Activated CD8-positive, alpha-beta T cell treated with anti-CD3 and anti-CD28 coated beads, Interleukin-2, amount 10 ng/mL, durations not matched to agents 7 days and 5 days (primary cell): ENCODE measurements at regions of chr19 and their contacts with region 1.

Region 1: GRCh38 chr19:49929611-49930482 is 543 bp upstream of the NUP62 start:
- DNase-seq: peak; percentile 97
- ATAC-seq: peak; percentile 84
- H3K4me3 Mint-ChIP-seq: peak overlapping the region; percentile 97
- H3K27ac Mint-ChIP-seq: peak overlapping the region; percentile 99
- H3K4me1 Mint-ChIP-seq: peaks cover 70% of the 10 kb centered on the region
- H3K27me3 Mint-ChIP-seq: no peaks in the 10 kb centered on the region

Region 2: DNA sequence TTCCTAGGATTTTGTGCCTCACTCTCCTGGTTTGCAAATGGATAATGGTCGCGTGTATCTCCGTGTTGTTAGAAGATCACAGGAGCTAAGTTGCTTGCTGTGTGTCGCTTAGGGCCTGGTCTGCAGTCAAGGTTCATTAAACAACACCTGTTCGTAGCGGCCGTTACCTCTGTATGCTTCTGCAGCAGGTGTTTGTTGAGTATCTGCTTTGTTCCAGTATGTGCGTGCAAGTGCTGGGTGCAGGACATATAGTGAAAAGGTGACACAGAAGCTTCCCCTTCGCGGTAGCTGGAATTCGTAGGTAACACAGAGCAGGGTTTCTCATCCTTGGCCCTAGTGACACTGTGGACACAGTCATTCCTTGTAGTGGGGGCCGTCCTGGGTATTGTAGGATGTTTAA is 106.4 kb before region 1 on chr19:
- CTCF ChIA-PET with region 1: no interaction called
- POLR2A ChIA-PET with region 1: no interaction called
- DNase-seq: no peak
- ATAC-seq: no peak
- H3K4me3 Mint-ChIP-seq: no peak overlapping the region
- H3K27ac Mint-ChIP-seq: no peak overlapping the region
- H3K4me1 Mint-ChIP-seq: peaks cover 14% of the 10 kb centered on the region
- H3K27me3 Mint-ChIP-seq: no peaks in the 10 kb centered on the region

Region 3: DNA sequence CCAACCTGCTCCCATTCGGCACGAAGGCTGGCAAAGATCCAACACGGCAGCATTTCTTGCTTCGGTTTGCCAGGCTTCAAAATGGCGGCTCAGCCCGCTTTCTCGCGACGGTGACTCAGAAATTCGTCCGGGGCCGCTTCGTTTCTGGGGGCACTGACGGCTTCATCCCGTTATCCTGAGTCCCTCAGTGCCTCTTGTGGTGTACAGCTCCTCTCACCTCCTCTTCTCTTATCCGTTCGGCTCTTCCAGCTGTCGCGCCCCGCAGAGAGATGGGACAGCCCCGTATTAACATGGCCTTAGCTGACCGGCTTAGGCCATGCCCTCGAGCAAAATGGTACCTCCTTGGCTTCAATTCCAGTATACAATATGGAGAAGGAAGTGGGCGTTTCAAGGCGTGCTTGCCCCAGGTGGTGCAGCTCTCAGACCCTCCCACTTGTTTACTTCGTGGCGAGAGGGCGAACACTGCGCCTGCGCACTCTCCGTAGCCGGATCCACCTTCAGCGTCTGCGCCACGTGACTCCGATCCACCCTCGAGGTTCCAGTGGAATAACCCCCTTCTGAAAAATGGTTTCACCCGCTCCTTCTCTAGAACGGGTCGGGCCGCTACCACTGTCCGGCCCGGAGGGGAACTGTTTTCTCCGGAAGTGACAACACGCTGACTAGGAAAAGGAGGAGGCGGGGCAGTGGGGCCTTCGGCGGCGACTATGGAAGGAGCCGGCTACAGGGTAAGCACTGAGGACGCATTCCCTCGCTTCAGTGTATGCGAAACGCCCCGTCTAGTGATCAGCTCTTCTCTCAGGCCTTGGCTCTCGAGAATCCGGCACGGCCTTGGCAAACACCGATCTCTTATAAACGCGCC is 52.6 kb before region 1 on chr19 and contains the starts of genes AKT1S1 and TBC1D17:
- CTCF ChIA-PET with region 1: no interaction called
- POLR2A ChIA-PET with region 1: interaction called, 14 read pairs
- DNase-seq: peak; percentile 99
- ATAC-seq: peak; percentile 75
- H3K4me3 Mint-ChIP-seq: no peak within 1 kb of the TSS
- H3K27ac Mint-ChIP-seq: no peak within 1 kb of the TSS
- H3K4me1 Mint-ChIP-seq: peaks cover 33% of the 10 kb centered on the region
- H3K27me3 Mint-ChIP-seq: no peaks in the 10 kb centered on the region
- total RNA-seq, gene AKT1S1: 15.6 to 16.4 TPM
- total RNA-seq, gene TBC1D17: 28.6 to 30.8 TPM

Region 4: GRCh38 chr19:49896863-49897621 is 32.8 kb before region 1 on chr19 and contains the start of gene IL4I1:
- CTCF ChIA-PET with region 1: interaction called, 4 read pairs
- POLR2A ChIA-PET with region 1: interaction called, 27 read pairs
- DNase-seq: peak; percentile 72
- ATAC-seq: peak; percentile 73
- H3K4me3 Mint-ChIP-seq: peak within 1 kb of the TSS; percentile 53
- H3K27ac Mint-ChIP-seq: peak within 1 kb of the TSS; percentile 87
- H3K4me1 Mint-ChIP-seq: peaks cover 37% of the 10 kb centered on the region
- H3K27me3 Mint-ChIP-seq: no peaks in the 10 kb centered on the region
- total RNA-seq, gene IL4I1: 1.2 to 1.6 TPM

Region 5: GRCh38 chr19:49911381-49912145 is 18.3 kb before region 1 on chr19:
- CTCF ChIA-PET with region 1: interaction called, 6 read pairs
- POLR2A ChIA-PET with region 1: interaction called, 16 read pairs
- DNase-seq: no peak
- ATAC-seq: no peak
- H3K4me3 Mint-ChIP-seq: no peak overlapping the region
- H3K27ac Mint-ChIP-seq: peak overlapping the region; percentile 44
- H3K4me1 Mint-ChIP-seq: peaks cover 31% of the 10 kb centered on the region
- H3K27me3 Mint-ChIP-seq: no peaks in the 10 kb centered on the region